Activated CD4-positive, alpha-beta memory T cell treated with anti-CD3 and anti-CD28 coated beads, Interleukin-2, amount 10 ng/mL, durations not matched to agents 7 days and 5 days (primary cell): ENCODE measurements at regions of chr3 and their contacts with region 1.

Region 1: DNA sequence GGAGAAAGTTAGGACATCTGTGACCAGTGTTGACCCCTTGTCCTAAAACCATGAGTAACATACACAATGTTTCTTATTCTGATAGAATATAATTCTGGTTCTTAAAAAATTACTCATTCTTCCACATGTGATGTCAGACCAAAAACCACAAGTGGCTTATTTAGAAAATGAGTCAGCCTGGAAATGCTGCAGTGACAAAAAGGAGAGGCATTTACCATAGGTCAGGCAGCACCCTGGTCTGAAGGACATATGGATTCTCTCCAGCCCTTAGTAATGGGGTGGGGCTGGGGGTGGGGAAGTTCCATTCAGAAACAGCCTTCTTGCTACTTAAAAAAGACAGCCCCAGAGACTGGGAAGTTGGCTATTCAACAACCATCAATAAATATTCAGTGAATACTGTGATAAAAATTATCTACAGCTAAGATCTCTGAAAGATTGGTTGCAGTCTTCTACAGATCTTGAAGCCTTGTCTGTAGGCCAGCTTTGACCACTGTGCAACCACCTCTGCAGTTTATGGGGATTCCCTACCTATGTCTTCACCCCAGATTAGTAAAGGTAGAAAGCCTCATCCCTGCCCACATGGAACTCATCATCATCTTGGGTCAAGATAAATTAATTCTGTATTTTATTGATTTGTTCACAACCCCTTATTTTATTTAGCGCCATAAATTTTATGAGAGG is 34.9 kb upstream of the TIMP4 start:
- DNase-seq: peak; percentile 55
- H3K4me3 Mint-ChIP-seq: no peak overlapping the region
- H3K27ac Mint-ChIP-seq: peak overlapping the region; percentile 78
- H3K4me1 Mint-ChIP-seq: peaks cover 52% of the 10 kb centered on the region
- H3K27me3 Mint-ChIP-seq: no peaks in the 10 kb centered on the region

Region 2: GRCh38 chr3:11671648-11672100 is 522.0 kb before region 1 on chr3:
- CTCF ChIA-PET with region 1: no interaction called
- POLR2A ChIA-PET with region 1: no interaction called
- DNase-seq: no peak
- H3K4me3 Mint-ChIP-seq: no peak overlapping the region
- H3K27ac Mint-ChIP-seq: no peak overlapping the region
- H3K4me1 Mint-ChIP-seq: peaks cover 4% of the 10 kb centered on the region
- H3K27me3 Mint-ChIP-seq: no peaks in the 10 kb centered on the region

Region 3: DNA sequence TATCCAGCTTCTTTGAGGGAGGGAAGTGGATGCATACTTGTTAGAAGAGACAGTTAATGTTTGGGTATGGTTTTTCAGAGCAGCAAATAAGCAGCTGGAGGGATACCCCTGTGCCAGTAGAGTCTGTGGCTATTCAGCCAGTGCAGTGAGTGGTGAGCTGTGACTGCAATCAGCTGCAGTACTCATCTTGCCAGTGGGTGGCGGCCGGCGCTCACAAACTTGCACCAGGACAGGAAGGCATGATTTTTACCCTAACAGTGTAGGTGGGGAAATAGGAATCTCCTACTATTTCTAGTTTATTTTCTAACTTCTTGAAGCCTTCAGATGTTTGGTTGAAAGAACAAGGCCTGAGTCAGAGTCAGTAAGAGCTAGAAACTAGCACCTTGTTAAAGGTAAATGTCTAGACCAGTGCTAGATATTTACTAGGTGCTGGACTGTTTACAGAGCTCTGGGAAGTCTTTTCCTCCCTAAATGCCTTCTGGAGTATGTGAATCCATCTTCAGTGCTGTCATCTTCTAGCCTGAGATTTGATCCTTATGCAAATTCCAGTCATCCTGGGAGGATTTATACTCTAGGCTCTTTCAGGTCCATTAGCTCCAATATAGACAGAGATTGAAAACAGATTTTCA is 58.5 kb before region 1 on chr3:
- CTCF ChIA-PET with region 1: interaction called, 26 read pairs
- POLR2A ChIA-PET with region 1: interaction called, 7 read pairs
- DNase-seq: peak; percentile 71
- H3K4me3 Mint-ChIP-seq: no peak overlapping the region
- H3K27ac Mint-ChIP-seq: no peak overlapping the region
- H3K4me1 Mint-ChIP-seq: peaks cover 2% of the 10 kb centered on the region
- H3K27me3 Mint-ChIP-seq: peaks cover 30% of the 10 kb centered on the region

Region 4: GRCh38 chr3:12175844-12176453 is 17.7 kb before region 1 on chr3:
- CTCF ChIA-PET with region 1: interaction called, 36 read pairs
- POLR2A ChIA-PET with region 1: no interaction called
- DNase-seq: peak; percentile 43
- H3K4me3 Mint-ChIP-seq: no peak overlapping the region
- H3K27ac Mint-ChIP-seq: no peak overlapping the region
- H3K4me1 Mint-ChIP-seq: peaks cover 8% of the 10 kb centered on the region
- H3K27me3 Mint-ChIP-seq: no peaks in the 10 kb centered on the region

Region 5: GRCh38 chr3:12182687-12183441 is 10.8 kb before region 1 on chr3:
- CTCF ChIA-PET with region 1: interaction called, 36 read pairs
- POLR2A ChIA-PET with region 1: no interaction called
- DNase-seq: no peak
- H3K4me3 Mint-ChIP-seq: no peak overlapping the region
- H3K27ac Mint-ChIP-seq: no peak overlapping the region
- H3K4me1 Mint-ChIP-seq: peaks cover 25% of the 10 kb centered on the region
- H3K27me3 Mint-ChIP-seq: no peaks in the 10 kb centered on the region

Region 6: GRCh38 chr3:12345141-12345561 is 151.5 kb after region 1 on chr3:
- CTCF ChIA-PET with region 1: no interaction called
- POLR2A ChIA-PET with region 1: no interaction called
- DNase-seq: no peak
- H3K4me3 Mint-ChIP-seq: peak overlapping the region; percentile 2
- H3K27ac Mint-ChIP-seq: peak overlapping the region; percentile 2
- H3K4me1 Mint-ChIP-seq: peaks cover 12% of the 10 kb centered on the region
- H3K27me3 Mint-ChIP-seq: peaks cover 20% of the 10 kb centered on the region

Region 7: GRCh38 chr3:12380461-12380860 is 186.8 kb after region 1 on chr3:
- CTCF ChIA-PET with region 1: no interaction called
- POLR2A ChIA-PET with region 1: no interaction called
- DNase-seq: no peak
- H3K4me3 Mint-ChIP-seq: no peak overlapping the region
- H3K27ac Mint-ChIP-seq: no peak overlapping the region
- H3K4me1 Mint-ChIP-seq: peaks cover 30% of the 10 kb centered on the region
- H3K27me3 Mint-ChIP-seq: peaks cover 13% of the 10 kb centered on the region